Breast epithelium (tissue), 4 donors: ENCODE measurements at regions of chr12 and their contacts with region 1.

Region 1: DNA sequence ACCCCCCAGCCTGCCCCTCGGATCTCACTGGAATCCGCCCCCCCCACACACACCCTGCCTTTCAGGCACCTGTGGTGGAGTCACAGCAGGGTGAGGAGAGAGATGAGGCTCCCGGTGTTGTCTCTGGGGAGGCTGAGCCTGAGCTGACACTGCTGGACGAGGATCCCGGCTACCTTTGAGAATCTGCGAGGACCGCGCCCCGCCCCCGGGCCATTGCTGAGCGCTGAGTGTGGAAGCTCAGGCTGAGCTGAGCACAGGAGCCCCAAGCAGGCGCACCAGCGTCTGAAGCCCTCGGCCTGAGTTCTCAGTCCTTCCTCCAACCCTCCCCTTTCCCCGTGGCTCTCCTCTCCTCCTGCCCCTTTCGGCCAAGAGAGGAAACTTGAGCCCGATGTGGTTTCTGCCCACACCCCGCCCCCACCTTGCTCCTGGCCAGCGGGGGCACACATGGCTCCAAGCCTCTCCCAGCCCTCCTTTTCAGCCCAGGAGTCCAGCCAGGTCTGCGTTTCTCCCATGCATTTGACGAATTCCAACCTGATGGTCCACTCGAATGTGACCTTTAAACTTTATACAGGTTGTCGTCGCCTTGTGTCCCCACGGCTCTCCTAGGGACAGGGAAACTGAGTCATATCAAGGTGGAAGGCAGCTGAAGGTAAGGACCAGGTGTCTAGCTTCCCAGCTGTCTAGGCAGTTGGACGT is at the start of gene NFE2:
- DNase-seq: peak in 1 of 2 donors; percentile 75
- H3K4me3 ChIP-seq: peak within 1 kb of the TSS; percentile 24 to 57 (median 38)
- H3K27ac ChIP-seq: no peak within 1 kb of the TSS
- H3K4me1 ChIP-seq: peaks cover 0 to 3% of the 10 kb centered on the region in 2 donors
- H3K27me3 ChIP-seq: no peaks in the 10 kb centered on the region
- CTCF ChIP-seq: no peak
- POLR2A ChIP-seq: no peak
- total RNA-seq, gene NFE2: 0.15 to 0.48 (median 0.33) TPM

Region 2: GRCh38 chr12:53899232-53899631 is 401.6 kb before region 1 on chr12:
- intact Hi-C with region 1: loop called (anchors 5 kb)
- DNase-seq: no peak
- H3K4me3 ChIP-seq: no peak overlapping the region
- H3K27ac ChIP-seq: no peak overlapping the region
- H3K4me1 ChIP-seq: no peaks in the 10 kb centered on the region
- H3K27me3 ChIP-seq: peaks cover 0 to 3% of the 10 kb centered on the region in 2 donors
- CTCF ChIP-seq: no peak
- POLR2A ChIP-seq: no peak

Region 3: DNA sequence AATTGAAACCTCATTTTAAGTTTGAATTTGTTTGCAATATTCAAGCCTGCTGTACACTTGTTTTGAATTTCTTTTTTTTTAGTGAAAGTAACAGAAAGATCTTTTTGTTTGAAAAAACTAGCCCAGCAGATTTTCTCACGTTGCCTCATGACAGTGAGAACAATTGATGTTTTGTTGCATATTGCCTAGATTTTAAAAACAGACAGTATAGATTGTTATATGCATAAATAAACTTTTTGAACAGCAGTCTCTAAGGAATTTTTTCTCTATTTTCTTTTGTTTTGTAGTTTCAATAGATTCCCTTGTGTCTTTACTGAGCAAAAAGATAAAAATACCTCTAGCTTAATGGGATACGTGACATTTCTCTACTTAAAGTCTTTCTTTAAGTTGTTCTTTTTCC is 980.1 kb after region 1 on chr12:
- intact Hi-C with region 1: no loop called
- DNase-seq: no peak
- H3K4me3 ChIP-seq: no peak overlapping the region
- H3K27ac ChIP-seq: no peak overlapping the region
- H3K4me1 ChIP-seq: no peaks in the 10 kb centered on the region
- H3K27me3 ChIP-seq: no peaks in the 10 kb centered on the region
- CTCF ChIP-seq: no peak
- POLR2A ChIP-seq: no peak